GM18951 (cell line): ENCODE measurements at regions of chr1 and their contacts with region 1.

Region 1: GRCh38 chr1:1906185-1907097 is 8.6 kb upstream of the CALML6 start:
- POLR2A ChIP-seq: no peak

Region 2: GRCh38 chr1:1763657-1764616 is 142.5 kb before region 1 on chr1:
- in situ Hi-C with region 1: loop called (anchors 10 kb)
- POLR2A ChIP-seq: no peak

Region 3: GRCh38 chr1:2009101-2010053 is 102.9 kb after region 1 on chr1:
- in situ Hi-C with region 1: no loop called
- POLR2A ChIP-seq: no peak